ENCODE measurements at regions of chr4 and their contacts with region 1.

Region 1: DNA sequence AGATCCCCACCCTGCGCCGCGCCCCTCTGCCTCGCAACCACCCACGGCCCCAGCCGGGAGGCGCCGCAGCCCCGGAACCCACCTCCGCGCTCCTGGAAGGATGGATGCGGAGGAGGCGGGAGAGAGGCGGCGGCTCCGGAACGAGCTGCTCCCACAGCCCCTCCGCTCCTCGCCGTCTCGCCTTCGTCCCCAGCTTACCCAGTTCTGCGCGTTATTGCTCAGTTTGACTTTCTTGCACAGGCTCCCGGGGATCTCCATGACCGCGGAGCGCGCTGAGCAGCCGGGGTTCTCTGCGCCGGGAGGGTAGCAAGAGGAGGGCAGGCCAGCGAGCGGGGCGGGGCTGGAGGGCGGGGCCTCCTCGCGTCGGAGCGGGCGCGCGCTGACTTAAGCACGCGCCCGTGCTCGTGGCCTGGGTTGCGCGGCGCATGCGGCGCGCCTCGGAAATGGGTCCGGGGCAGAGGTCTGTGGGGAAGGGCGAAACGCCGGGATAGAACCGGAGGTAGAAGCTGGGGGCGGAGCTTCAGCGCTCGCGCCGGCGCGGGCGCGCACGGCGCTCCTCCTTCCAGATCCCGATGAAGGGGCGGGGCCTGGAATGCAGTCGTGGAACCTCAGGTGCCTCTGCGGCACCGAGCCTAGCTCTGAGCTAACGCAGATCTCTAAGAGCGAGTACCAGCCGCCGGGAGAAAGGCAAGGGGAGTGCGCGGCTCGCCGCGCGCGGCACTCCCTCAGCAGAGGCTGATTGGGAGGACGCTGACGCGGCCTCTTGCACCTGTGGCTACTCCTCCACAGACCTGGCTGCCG is at the start of gene PAPSS1:
- DNase-seq: peak; percentile 98
- H3K4me3 Mint-ChIP-seq: peak within 1 kb of the TSS; percentile 82
- H3K27ac Mint-ChIP-seq: peak within 1 kb of the TSS; percentile 89
- H3K4me1 Mint-ChIP-seq: peaks cover 20% of the 10 kb centered on the region
- H3K27me3 Mint-ChIP-seq: no peaks in the 10 kb centered on the region
- CTCF ChIP-seq: no peak
- total RNA-seq, gene PAPSS1: 58.7 and 63.9 TPM in 2 replicates

Region 2: GRCh38 chr4:107689912-107690565 is 30.1 kb before region 1 on chr4:
- CTCF ChIA-PET with region 1: interaction called, 3 read pairs
- POLR2A ChIA-PET with region 1: interaction called, 13 read pairs
- intact Hi-C with region 1: no loop called
- DNase-seq: peak; percentile 67
- H3K4me3 Mint-ChIP-seq: no peak overlapping the region
- H3K27ac Mint-ChIP-seq: no peak overlapping the region
- H3K4me1 Mint-ChIP-seq: no peaks in the 10 kb centered on the region
- H3K27me3 Mint-ChIP-seq: no peaks in the 10 kb centered on the region
- CTCF ChIP-seq: no peak

Region 3: DNA sequence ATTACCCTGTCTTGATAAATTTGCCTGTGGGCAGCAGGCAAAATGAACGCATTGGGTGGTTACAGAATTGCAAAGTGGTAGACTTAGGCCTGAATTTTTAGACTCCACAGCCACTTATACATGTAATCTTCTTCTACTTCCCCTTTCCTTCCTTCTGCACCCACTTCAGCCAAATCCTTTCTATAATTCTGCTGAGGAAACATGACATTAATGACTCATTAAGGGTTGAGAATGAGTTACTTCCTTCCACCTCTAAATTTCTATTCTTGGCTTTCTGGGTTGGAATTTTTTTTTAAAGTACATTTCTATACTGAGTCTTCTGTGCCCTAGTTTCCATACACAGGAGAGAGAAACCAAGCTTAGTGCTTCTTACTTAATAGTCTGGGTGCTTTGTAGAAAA is 10.2 kb before region 1 on chr4:
- CTCF ChIA-PET with region 1: no interaction called
- POLR2A ChIA-PET with region 1: interaction called, 15 read pairs
- intact Hi-C with region 1: no loop called
- DNase-seq: peak; percentile 27
- H3K4me3 Mint-ChIP-seq: no peak overlapping the region
- H3K27ac Mint-ChIP-seq: peak overlapping the region; percentile 19
- H3K4me1 Mint-ChIP-seq: peaks cover 23% of the 10 kb centered on the region
- H3K27me3 Mint-ChIP-seq: no peaks in the 10 kb centered on the region
- CTCF ChIP-seq: no peak

Region 4: DNA sequence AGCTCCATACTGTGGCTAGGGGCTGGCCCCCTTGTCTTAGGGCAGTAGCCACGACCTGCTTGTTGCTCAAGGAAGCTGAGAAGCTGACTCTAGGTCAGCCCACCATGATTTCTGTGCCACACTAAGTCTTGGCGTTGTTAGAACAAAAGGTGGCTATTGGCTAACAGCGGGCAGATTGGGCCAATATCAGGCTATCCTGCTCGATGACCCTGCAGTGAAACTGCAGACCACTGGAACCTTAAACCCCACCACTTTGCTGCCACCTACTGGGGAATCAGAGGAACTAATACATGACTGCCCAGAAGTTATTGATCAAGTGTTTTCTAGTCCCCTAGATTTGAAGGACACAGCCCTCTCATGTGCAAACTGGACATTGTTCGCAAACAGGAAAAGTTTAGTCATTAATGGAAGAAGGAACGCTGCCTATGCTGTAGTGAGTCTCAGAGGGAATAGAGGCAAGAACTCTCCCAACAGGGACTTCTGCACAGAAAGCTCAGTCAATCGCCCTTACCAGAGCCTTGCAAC is 16.9 kb after region 1 on chr4:
- CTCF ChIA-PET with region 1: interaction called, 21 read pairs
- POLR2A ChIA-PET with region 1: interaction called, 5 read pairs
- intact Hi-C with region 1: no loop called
- DNase-seq: peak; percentile 57
- H3K4me3 Mint-ChIP-seq: no peak overlapping the region
- H3K27ac Mint-ChIP-seq: no peak overlapping the region
- H3K4me1 Mint-ChIP-seq: no peaks in the 10 kb centered on the region
- H3K27me3 Mint-ChIP-seq: no peaks in the 10 kb centered on the region
- CTCF ChIP-seq: peak; percentile 77

Region 5: GRCh38 chr4:107838861-107839565 is 118.9 kb after region 1 on chr4:
- CTCF ChIA-PET with region 1: no interaction called
- POLR2A ChIA-PET with region 1: no interaction called
- intact Hi-C with region 1: no loop called
- DNase-seq: peak; percentile 48
- H3K4me3 Mint-ChIP-seq: no peak overlapping the region
- H3K27ac Mint-ChIP-seq: no peak overlapping the region
- H3K4me1 Mint-ChIP-seq: peaks cover 20% of the 10 kb centered on the region
- H3K27me3 Mint-ChIP-seq: no peaks in the 10 kb centered on the region
- CTCF ChIP-seq: no peak